ENCODE measurements at regions of chr10 and their contacts with region 1.

Region 1: GRCh38 chr10:71323407-71323806 is 4.3 kb downstream of the SLC29A3 start:
- DNase-seq: peak; percentile 55
- H3K4me3 ChIP-seq: no peak overlapping the region
- H3K27ac ChIP-seq: no peak overlapping the region
- H3K4me1 ChIP-seq: no peaks in the 10 kb centered on the region; the same call in 1 of the 2 replicates
- H3K27me3 ChIP-seq: no peaks in the 10 kb centered on the region

Region 2: GRCh38 chr10:70993051-70993450 is 330.4 kb before region 1 on chr10:
- in situ Hi-C with region 1: no loop called
- DNase-seq: no peak
- H3K4me3 ChIP-seq: no peak overlapping the region
- H3K27ac ChIP-seq: no peak overlapping the region
- H3K4me1 ChIP-seq: no peaks in the 10 kb centered on the region
- H3K27me3 ChIP-seq: peaks cover 27% of the 10 kb centered on the region

Region 3: GRCh38 chr10:71531485-71532446 is 208.4 kb after region 1 on chr10:
- in situ Hi-C with region 1: no loop called
- DNase-seq: peak; percentile 13
- H3K4me3 ChIP-seq: no peak overlapping the region
- H3K27ac ChIP-seq: no peak overlapping the region
- H3K4me1 ChIP-seq: no peaks in the 10 kb centered on the region
- H3K27me3 ChIP-seq: no peaks in the 10 kb centered on the region

Region 4: GRCh38 chr10:71812016-71812912 is 488.9 kb after region 1 on chr10:
- in situ Hi-C with region 1: loop called (anchors 10 kb)
- DNase-seq: peak; percentile 70
- H3K4me3 ChIP-seq: no peak overlapping the region
- H3K27ac ChIP-seq: no peak overlapping the region
- H3K4me1 ChIP-seq: no peaks in the 10 kb centered on the region
- H3K27me3 ChIP-seq: no peaks in the 10 kb centered on the region